Naive thymus-derived CD4-positive, alpha-beta T cell (primary cell): ENCODE measurements at regions of chr7 and their contacts with region 1.

Region 1: GRCh38 chr7:82729172-82730030 is 285.8 kb upstream of the CACNA2D1 start:
- DNase-seq: peak in 3 of 9 donors; percentile 4 to 11 (median 11)
- ATAC-seq: no peak
- H3K4me3 ChIP-seq: no peak overlapping the region
- H3K4me3 Mint-ChIP-seq: no peak overlapping the region
- H3K27ac ChIP-seq: no peak overlapping the region
- H3K27ac Mint-ChIP-seq: no peak overlapping the region
- H3K4me1 ChIP-seq: no peaks in the 10 kb centered on the region
- H3K4me1 Mint-ChIP-seq: peaks cover 0 to 2% (median 0%) of the 10 kb centered on the region in 7 donors
- H3K27me3 ChIP-seq: no peaks in the 10 kb centered on the region
- H3K27me3 Mint-ChIP-seq: no peaks in the 10 kb centered on the region

Region 2: GRCh38 chr7:81482600-81483186 is 1246.7 kb before region 1 on chr7:
- CTCF ChIA-PET with region 1: no interaction called
- POLR2A ChIA-PET with region 1: no interaction called
- intact Hi-C with region 1: loop called (anchors 1 to 5 kb)
- DNase-seq: peak in 1 of 9 donors; percentile 1
- ATAC-seq: no peak
- H3K4me3 ChIP-seq: no peak overlapping the region
- H3K4me3 Mint-ChIP-seq: no peak overlapping the region
- H3K27ac ChIP-seq: no peak overlapping the region
- H3K27ac Mint-ChIP-seq: no peak overlapping the region
- H3K4me1 ChIP-seq: no peaks in the 10 kb centered on the region
- H3K4me1 Mint-ChIP-seq: peaks cover 0 to 1% (median 0%) of the 10 kb centered on the region in 7 donors
- H3K27me3 ChIP-seq: no peaks in the 10 kb centered on the region
- H3K27me3 Mint-ChIP-seq: no peaks in the 10 kb centered on the region

Region 3: GRCh38 chr7:82044497-82045080 is 684.8 kb before region 1 on chr7:
- CTCF ChIA-PET with region 1: no interaction called
- POLR2A ChIA-PET with region 1: no interaction called
- intact Hi-C with region 1: loop called (anchors 1 kb)
- DNase-seq: peak in 1 of 9 donors; percentile 7
- ATAC-seq: no peak
- H3K4me3 ChIP-seq: no peak overlapping the region
- H3K4me3 Mint-ChIP-seq: no peak overlapping the region
- H3K27ac ChIP-seq: no peak overlapping the region
- H3K27ac Mint-ChIP-seq: no peak overlapping the region
- H3K4me1 ChIP-seq: no peaks in the 10 kb centered on the region
- H3K4me1 Mint-ChIP-seq: no peaks in the 10 kb centered on the region
- H3K27me3 ChIP-seq: no peaks in the 10 kb centered on the region
- H3K27me3 Mint-ChIP-seq: no peaks in the 10 kb centered on the region

Region 4: DNA sequence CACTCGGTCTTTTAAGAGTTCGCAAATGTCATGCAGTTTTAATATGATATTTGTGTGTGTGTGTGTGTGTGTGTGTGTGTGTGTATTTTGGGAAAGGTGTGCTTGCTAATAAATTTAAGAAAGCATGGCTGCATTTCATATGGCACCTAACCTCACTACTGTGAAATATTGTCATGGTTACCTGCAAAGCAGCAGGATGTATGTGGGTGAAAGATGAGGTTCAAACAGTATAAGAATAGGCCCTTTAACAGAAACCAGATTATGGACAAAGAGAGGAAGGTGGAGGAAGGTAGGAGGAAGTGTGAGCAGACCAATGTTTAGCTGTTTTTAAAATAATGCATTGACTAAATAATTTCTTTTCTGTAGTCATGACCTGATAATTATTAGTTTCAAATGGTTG is 212.4 kb before region 1 on chr7:
- CTCF ChIA-PET with region 1: no interaction called
- POLR2A ChIA-PET with region 1: no interaction called
- intact Hi-C with region 1: loop called in 1 of 2 experiments (anchors 10 kb)
- DNase-seq: no peak
- ATAC-seq: no peak
- H3K4me3 ChIP-seq: no peak overlapping the region
- H3K4me3 Mint-ChIP-seq: no peak overlapping the region
- H3K27ac ChIP-seq: no peak overlapping the region
- H3K27ac Mint-ChIP-seq: no peak overlapping the region
- H3K4me1 ChIP-seq: no peaks in the 10 kb centered on the region
- H3K4me1 Mint-ChIP-seq: no peaks in the 10 kb centered on the region
- H3K27me3 ChIP-seq: no peaks in the 10 kb centered on the region
- H3K27me3 Mint-ChIP-seq: peaks cover 0 to 4% (median 0%) of the 10 kb centered on the region in 5 donors

Region 5: DNA sequence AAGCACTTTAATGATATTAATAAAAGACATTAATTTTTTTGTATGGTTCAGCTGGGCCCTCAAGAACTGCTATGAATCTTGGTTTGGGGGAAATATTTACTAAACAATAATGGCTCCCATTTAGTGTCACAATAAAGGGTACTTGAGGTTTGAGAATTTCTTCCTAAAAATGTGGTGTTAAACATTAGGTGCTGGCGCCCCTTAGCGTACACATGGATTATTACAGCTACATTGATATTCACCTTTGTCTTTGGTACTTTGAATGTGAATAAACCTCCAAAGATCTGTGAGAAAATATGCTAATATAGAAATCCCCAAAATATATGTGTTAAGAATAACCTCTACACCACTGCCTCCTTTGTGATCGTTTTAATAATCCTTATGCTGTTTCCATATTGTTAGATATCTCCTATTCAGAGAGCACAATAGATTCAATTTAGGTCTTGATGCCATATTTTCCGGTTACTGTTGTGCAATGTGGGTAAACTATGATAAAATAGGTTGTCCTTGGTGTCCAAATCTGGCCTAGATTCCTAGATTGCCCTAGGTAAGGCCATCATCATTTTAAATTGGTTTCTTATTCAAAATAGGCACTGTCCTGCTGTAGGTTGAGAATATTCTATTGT is 124.0 kb before region 1 on chr7:
- CTCF ChIA-PET with region 1: no interaction called
- POLR2A ChIA-PET with region 1: no interaction called
- intact Hi-C with region 1: loop called (anchors 1 kb)
- DNase-seq: no peak
- ATAC-seq: no peak
- H3K4me3 ChIP-seq: no peak overlapping the region
- H3K4me3 Mint-ChIP-seq: no peak overlapping the region
- H3K27ac ChIP-seq: no peak overlapping the region
- H3K27ac Mint-ChIP-seq: no peak overlapping the region
- H3K4me1 ChIP-seq: no peaks in the 10 kb centered on the region
- H3K4me1 Mint-ChIP-seq: no peaks in the 10 kb centered on the region
- H3K27me3 ChIP-seq: no peaks in the 10 kb centered on the region
- H3K27me3 Mint-ChIP-seq: no peaks in the 10 kb centered on the region

Region 6: DNA sequence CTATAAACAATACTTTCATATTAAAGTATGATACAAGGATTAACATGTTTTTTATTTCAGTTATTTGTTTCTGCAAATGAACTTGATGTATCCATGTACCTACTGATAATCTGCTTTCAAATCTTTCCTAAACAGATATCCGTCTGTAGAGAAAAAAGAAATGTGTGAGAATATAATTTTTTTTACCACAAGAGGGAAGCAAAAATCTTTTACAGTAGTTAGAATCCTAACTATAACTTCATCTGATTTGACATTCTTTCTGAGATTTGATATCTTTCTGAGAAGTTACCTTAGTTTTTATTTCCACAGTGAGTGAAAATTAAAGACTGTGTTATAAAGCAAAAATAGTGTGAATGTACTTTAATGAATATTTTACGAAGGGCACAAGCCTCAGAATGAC is 637.2 kb after region 1 on chr7:
- CTCF ChIA-PET with region 1: no interaction called
- POLR2A ChIA-PET with region 1: no interaction called
- intact Hi-C with region 1: no loop called
- DNase-seq: no peak
- ATAC-seq: no peak
- H3K4me3 ChIP-seq: no peak overlapping the region
- H3K4me3 Mint-ChIP-seq: no peak overlapping the region
- H3K27ac ChIP-seq: no peak overlapping the region
- H3K27ac Mint-ChIP-seq: no peak overlapping the region
- H3K4me1 ChIP-seq: no peaks in the 10 kb centered on the region
- H3K4me1 Mint-ChIP-seq: no peaks in the 10 kb centered on the region
- H3K27me3 ChIP-seq: no peaks in the 10 kb centered on the region
- H3K27me3 Mint-ChIP-seq: no peaks in the 10 kb centered on the region